ENCODE measurements at regions of chr9 and their contacts with region 1.

Region 1: DNA sequence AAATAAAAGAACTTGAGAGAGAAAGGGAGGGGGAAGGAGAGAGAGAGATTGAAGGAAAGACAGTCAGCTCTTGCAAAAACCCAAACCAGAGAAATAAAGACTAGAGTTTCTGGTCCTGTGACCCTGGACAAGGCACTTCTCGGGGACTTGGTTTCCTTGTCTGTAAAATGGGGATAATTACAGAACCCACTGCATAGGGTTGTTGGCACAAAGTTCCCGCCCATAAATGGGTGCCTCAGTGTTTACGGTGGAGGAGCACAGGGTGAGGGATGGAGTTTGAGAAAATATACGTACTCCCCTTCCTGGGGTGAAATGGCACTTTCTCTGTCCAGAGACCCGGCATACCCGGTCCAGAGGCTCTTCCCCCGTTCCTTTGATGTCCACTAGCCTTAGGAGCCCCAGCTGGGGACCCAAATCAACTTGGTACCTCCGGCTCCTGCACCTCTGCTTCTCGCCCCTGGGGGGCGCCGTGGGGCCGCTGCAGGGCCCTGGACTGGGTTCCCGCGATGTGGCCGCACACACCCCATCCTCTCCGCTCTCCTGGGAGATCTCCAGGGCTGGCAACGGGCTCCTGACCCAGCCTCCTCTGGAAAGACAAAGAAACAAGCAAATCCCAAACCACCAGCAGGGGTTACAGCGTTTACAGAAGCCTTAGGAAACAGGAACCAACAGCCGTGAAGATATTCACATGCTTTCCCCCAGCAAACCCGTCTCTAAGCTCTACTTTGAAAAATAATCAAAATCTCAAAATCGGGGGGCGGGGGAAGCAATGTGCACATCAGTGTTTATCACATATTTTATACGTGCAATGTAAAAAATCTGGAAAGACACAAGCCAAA is 26.3 kb downstream of the PTGES start:
- DNase-seq: peak; percentile 68
- ATAC-seq: peak; percentile 94
- H3K4me3 Mint-ChIP-seq: no peak overlapping the region
- H3K27ac Mint-ChIP-seq: no peak overlapping the region
- H3K4me1 Mint-ChIP-seq: peaks cover 2% of the 10 kb centered on the region
- H3K27me3 Mint-ChIP-seq: peaks cover 8% of the 10 kb centered on the region

Region 2: GRCh38 chr9:129131300-129132145 is 595.0 kb before region 1 on chr9:
- CTCF ChIA-PET with region 1: no interaction called
- DNase-seq: peak; percentile 89
- ATAC-seq: peak; percentile 97
- H3K4me3 Mint-ChIP-seq: no peak overlapping the region
- H3K27ac Mint-ChIP-seq: no peak overlapping the region
- H3K4me1 Mint-ChIP-seq: peaks cover 9% of the 10 kb centered on the region
- H3K27me3 Mint-ChIP-seq: no peaks in the 10 kb centered on the region

Region 3: DNA sequence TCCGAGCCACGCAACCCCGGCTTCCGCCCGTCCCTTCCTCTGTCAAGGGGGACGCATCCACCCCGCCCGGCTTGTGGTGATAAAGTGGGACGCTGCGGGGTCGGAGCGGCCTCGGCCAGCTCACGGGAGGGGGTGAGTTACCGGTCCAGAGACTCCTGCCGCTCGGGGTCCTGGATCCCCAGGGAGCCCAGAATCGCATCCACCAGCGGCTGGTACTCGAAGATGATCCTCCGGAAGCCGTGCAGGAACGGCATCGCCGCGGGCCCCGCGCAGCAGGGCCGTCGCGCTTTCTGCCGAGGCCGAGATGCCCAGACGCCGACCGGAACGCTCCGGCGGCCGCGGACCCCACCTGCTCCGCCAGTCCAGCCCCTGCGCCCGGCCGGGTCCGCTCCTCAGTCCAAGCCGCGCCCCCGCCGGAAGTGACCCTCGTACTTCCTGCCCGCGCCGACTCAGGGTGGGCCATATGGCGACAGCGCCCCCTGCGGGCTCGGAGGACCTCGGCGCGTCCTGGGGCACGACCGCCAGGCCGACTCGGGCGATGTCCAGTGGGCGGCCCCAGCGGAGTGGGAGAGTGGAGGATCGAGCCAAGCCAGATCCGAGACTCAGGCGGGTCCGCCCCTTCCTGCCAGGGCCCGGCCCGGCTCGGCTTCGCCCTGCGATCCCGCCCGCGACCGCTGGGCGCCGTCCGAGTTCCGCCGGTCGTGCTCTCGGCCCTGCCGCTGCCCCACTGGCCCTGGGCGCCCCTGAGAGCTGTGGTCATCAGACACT is 84.6 kb before region 1 on chr9 and contains the start of gene ASB6:
- CTCF ChIA-PET with region 1: interaction called, 13 read pairs
- DNase-seq: peak; percentile 95
- ATAC-seq: peak; percentile 94
- H3K4me3 Mint-ChIP-seq: peak within 1 kb of the TSS; percentile 83
- H3K27ac Mint-ChIP-seq: peak within 1 kb of the TSS; percentile 83
- H3K4me1 Mint-ChIP-seq: peaks cover 21% of the 10 kb centered on the region
- H3K27me3 Mint-ChIP-seq: no peaks in the 10 kb centered on the region
- total RNA-seq, gene ASB6: 25.0 to 26.4 TPM

Region 4: DNA sequence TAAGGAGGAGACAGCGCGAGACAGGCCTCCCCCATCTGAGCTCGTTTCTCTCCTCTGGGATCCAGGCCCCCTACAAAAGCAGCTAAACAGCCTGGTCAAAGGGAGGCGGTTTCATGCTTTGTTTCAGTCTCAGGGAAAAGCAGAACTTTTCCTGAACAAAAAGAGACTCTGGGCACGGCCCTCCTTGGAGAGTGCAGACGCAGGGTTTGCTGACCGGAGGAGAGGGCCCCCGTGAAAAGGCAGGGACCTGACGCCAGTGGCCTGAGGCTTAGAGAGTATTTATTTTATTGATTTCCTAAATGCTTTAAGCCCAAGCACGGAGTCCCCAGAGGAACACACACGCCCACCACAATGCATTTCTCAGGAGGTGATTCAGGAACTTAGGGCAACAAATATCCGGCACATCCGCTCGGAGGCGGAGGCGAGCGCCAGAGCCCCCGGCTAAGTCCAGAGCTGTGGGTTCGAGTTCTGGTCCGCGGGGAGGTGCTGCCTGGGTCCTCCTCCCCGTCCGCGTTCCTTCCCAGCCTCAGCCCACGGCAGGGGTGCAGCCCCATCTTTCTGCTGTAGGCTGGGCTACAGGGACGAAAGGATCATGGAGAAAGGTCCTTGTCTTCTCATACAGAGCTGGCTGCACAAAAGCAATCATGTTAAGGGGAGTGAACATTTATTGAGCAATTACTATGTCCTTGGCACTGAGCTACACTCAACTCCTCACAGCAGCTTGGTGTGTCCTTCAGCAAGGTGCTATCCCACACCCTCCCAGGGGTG is 13.7 kb before region 1 on chr9:
- CTCF ChIA-PET with region 1: interaction called, 20 read pairs
- DNase-seq: no peak
- ATAC-seq: no peak
- H3K4me3 Mint-ChIP-seq: no peak overlapping the region
- H3K27ac Mint-ChIP-seq: no peak overlapping the region
- H3K4me1 Mint-ChIP-seq: peaks cover 25% of the 10 kb centered on the region
- H3K27me3 Mint-ChIP-seq: peaks cover 24% of the 10 kb centered on the region

Region 5: DNA sequence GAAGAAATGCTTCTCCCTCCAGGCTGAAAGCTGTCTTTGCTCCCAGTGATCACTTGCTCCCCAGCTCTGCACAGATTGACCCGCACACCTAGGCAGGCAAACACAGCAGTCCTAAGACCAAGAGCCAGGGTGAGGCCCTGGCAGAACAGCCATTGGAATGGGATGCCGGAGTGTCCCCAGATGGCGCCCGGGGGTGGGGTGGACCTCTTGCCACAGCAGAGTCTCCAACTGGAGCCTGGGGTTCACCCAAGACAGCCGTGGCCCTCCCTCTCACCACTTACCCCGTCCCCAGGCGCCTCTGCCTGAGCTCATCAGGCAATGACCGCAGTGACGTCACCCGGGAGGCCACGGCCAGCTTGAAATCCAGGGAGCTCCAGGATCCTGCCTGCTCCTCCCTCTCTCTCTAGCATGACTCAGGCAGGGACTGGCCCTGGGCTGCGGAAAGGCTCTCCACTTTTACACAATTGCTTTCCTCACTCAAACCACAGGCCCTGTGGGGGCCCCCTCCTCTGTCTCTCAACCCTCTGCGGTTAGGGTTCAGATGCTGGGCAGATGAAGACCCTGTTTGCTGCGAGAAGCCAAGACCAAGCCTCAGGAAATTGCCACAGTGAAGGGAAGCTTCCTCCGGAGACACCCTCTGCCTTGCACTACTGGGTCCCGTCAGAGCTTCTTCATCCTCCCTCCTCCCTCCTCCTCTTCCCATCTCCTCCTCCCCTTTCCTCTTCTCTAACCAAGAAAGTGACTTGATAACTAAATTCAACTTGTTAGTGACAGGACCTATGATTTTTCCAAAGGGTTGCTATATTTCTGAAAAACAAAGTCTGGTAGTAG is 50.6 kb after region 1 on chr9:
- CTCF ChIA-PET with region 1: interaction called, 12 read pairs
- DNase-seq: peak; percentile 72
- ATAC-seq: peak; percentile 75
- H3K4me3 Mint-ChIP-seq: no peak overlapping the region
- H3K27ac Mint-ChIP-seq: no peak overlapping the region
- H3K4me1 Mint-ChIP-seq: peaks cover 16% of the 10 kb centered on the region
- H3K27me3 Mint-ChIP-seq: peaks cover 14% of the 10 kb centered on the region

Region 6: DNA sequence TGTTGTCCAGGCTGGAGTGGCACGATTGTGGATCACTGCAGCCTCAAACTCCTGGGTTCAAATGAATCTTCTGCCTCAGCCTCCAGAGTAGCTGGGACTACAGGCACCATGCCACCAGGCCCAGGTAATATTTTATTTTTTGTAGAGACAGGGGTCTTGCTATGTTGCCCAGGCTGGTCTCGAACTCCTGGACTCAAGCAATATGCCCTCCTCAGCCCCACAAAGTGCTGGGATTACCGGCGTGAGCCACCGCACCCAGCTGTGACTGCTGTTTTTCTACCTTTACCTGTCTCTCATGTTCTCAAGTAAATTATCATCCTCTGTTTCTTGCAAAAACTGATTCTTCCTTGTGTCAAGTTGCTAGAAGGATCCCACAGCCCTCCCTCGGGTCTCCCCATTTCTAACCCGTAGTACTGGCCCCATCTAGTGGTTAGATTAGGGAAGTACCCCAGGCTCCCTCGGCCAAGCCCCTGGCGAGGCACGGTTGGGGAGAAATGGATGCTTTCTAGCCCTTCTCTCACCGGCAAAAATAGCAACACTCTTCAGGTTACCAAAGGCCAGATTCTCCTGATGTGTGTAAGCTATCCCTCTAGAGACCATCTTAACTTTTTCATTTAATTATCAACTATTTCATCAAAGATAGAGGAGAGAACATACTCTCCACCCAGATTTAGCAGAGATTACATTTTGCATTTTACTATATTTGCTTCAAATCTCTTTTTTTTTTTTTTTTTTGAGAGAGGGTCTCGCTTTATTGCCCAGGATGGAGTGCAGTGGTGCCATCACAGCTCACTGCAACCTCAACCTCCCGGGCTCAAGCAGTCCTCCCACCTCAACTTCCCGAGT is 57.2 kb after region 1 on chr9:
- CTCF ChIA-PET with region 1: interaction called, 28 read pairs
- DNase-seq: peak; percentile 81
- ATAC-seq: peak; percentile 97
- H3K4me3 Mint-ChIP-seq: no peak overlapping the region
- H3K27ac Mint-ChIP-seq: no peak overlapping the region
- H3K4me1 Mint-ChIP-seq: peaks cover 4% of the 10 kb centered on the region
- H3K27me3 Mint-ChIP-seq: peaks cover 20% of the 10 kb centered on the region

Region 7: DNA sequence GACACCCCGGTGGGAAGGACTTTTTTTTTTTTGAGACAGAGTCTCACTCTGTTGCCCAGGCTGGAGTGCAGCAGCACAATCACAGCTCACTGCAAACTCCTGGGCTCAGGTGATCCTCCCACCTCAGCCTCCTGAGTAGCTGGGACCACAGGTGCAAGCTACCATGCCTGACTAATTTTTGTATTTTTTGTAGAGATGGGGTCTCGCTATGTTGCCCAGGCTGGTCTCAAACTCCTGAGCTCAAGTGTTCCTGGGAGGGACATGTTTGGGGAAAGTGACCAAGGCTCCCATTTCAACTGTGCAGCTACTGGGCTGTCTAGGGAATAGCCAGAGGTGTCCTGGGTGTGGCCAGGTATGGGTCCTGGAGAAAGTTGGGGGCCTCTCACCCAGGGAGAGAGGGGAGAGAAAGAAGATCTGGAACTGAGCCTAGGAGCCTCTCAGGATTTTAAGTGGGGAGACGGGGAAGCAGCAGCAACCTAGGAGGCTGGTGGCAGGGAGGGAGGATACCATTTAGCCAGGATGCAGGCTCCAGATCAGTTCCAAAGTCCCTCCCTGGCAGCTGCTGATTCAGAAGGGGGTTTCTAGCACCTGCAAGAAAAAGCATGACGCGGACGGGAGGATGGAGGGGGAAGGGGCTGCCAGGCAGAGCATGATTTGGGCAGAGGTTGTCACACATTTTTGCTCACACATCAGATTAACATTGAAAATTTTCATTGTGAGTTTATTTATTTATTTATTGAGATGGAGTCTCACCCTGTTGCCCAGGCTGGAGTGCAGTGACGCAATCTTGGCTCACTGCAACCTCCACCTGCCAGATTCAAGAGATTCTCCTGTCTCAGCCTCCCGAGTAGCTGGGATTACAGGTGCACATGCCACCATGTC is 69.7 kb after region 1 on chr9:
- CTCF ChIA-PET with region 1: interaction called, 27 read pairs
- DNase-seq: no peak
- ATAC-seq: no peak
- H3K4me3 Mint-ChIP-seq: no peak overlapping the region
- H3K27ac Mint-ChIP-seq: no peak overlapping the region
- H3K4me1 Mint-ChIP-seq: peaks cover 3% of the 10 kb centered on the region
- H3K27me3 Mint-ChIP-seq: peaks cover 12% of the 10 kb centered on the region

Measured in activated CD8-positive, alpha-beta memory T cell treated with anti-CD3 and anti-CD28 coated beads, Interleukin-2, amount 10 ng/mL, durations not matched to agents 7 days and 5 days (primary cell).